Activated CD4-positive, alpha-beta T cell treated with anti-CD3 and anti-CD28 coated beads for 36 hours (primary cell): ENCODE measurements at regions of chr16 and their contacts with region 1.

Region 1: DNA sequence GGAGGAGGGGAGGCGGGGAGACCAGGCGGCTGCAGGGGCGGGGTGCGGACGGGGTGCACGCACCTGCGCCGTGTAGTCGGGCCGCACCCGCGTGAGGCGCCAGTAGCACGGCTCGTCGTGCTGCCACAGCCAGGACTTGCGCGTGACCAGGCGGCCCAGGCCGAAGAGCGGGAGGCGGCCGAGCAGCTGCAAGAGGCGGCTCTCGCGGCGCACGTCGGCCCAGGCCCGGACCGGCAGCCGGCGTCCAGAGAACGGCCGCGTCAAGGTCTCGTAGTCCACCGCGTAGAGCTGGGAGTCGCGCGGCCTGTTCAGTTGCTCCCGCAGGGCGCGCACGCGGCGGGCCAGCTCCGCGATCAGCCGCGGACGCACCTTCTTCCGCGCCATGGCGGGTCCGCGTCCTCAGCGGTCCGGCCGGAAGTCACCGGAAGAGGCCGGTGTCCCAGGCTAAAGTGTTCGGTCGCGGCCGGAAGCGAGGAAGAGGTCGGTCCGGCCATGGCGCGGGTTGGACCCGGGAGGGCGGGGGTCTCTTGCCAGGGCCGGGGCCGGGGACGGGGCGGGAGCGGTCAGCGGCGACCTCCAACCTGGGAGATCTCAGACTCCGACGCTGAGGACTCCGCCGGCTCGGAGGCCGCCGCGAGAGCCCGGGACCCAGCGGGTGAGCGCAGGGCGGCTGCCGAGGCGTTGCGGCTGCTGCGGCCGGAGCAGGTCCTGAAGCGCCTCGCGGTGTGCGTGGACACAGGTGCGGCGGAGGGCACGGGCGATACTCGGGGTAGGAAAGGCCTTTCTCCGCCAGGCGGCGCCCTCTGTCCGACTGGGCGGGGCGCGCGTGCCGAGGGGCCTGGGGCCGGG is at the starts of genes EME2 and MRPS34:
- DNase-seq: peak; percentile 90
- ATAC-seq: peak; percentile 53
- H3K4me3 Mint-ChIP-seq: peak within 1 kb of the TSS; percentile 94
- H3K27ac Mint-ChIP-seq: peak within 1 kb of the TSS; percentile 99
- H3K4me1 Mint-ChIP-seq: peaks cover 9% of the 10 kb centered on the region
- H3K27me3 Mint-ChIP-seq: no peaks in the 10 kb centered on the region
- total RNA-seq, gene EME2: 13.1 to 18.4 TPM
- total RNA-seq, gene MRPS34: 146 to 175 TPM

Region 2: GRCh38 chr16:1492923-1493745 is 279.8 kb before region 1 on chr16 and contains the start of gene TELO2:
- CTCF ChIA-PET with region 1: no interaction called
- POLR2A ChIA-PET with region 1: no interaction called
- intact Hi-C with region 1: loop called in 1 of 2 experiments (anchors 1 kb)
- DNase-seq: peak; percentile 94
- ATAC-seq: peak; percentile 89
- H3K4me3 Mint-ChIP-seq: peak within 1 kb of the TSS; percentile 92
- H3K27ac Mint-ChIP-seq: peak within 1 kb of the TSS; percentile 97
- H3K4me1 Mint-ChIP-seq: peaks cover 15% of the 10 kb centered on the region
- H3K27me3 Mint-ChIP-seq: no peaks in the 10 kb centered on the region
- total RNA-seq, gene TELO2: 48.1 to 60.0 TPM

Region 3: DNA sequence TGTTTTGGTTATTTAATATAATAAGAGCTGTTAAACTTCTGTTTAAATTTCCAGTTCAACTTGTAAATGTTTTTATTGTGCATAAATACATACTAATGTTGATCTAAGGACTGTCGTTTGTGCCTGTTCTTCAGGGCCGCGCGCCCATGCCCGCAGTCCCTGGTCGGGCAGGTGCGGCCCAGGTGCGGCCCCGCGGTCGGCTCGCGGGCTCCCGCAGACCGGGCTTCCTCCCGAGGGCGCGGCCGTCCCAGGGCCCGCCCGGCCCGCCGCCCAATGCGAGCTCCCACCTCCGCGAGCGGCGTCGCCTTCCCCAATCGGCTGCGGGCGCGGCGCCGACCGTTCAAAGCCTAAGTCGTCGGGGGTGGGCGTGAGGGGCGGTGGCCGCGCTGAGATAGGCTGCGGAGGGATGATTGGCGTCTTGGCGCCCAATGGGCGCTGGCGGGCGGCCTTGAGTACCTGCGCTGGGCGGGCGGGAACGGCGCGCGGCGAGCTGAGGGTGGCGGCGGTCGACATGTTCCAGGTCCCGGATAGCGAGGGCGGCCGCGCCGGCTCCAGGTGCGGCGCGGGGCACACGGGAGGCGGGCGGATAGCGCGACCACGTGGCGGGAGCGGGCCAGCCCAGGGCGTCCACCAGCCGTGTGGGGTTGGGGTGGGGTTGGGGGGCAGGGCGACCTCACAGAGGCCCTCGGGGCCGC is 95.0 kb before region 1 on chr16 and contains the start of gene JPT2:
- CTCF ChIA-PET with region 1: no interaction called
- POLR2A ChIA-PET with region 1: no interaction called
- intact Hi-C with region 1: loop called in 1 of 2 experiments (anchors 1 kb)
- DNase-seq: peak; percentile 98
- ATAC-seq: peak; percentile 99
- H3K4me3 Mint-ChIP-seq: peak within 1 kb of the TSS; percentile 94
- H3K27ac Mint-ChIP-seq: peak within 1 kb of the TSS; percentile 89
- H3K4me1 Mint-ChIP-seq: peaks cover 26% of the 10 kb centered on the region
- H3K27me3 Mint-ChIP-seq: no peaks in the 10 kb centered on the region
- total RNA-seq, gene JPT2: 77.1 to 111 TPM

Region 4: DNA sequence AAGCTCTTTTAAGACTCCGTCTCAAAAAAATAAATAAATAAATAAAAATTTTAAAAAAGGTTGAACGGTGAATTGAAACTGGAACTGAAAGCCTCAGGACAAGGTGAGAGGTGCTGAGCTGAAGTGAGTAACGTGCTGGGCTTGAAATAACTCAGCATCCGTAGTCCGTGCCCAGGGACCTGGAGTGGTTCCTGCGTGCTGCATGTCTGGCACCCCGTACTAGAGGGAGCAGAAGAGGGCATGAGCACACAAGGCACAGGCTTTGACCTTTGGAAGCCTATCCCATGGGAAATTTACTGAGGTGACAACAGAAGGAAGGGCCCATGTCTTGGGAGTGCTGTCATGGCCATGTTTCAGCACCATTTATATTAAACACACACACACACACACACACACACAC is 103.5 kb after region 1 on chr16:
- CTCF ChIA-PET with region 1: no interaction called
- POLR2A ChIA-PET with region 1: no interaction called
- intact Hi-C with region 1: no loop called
- DNase-seq: peak; percentile 39
- ATAC-seq: peak; percentile 78
- H3K4me3 Mint-ChIP-seq: no peak overlapping the region
- H3K27ac Mint-ChIP-seq: no peak overlapping the region
- H3K4me1 Mint-ChIP-seq: peaks cover 3% of the 10 kb centered on the region
- H3K27me3 Mint-ChIP-seq: peaks cover 22% of the 10 kb centered on the region

Region 5: GRCh38 chr16:1929578-1930337 is 156.8 kb after region 1 on chr16:
- CTCF ChIA-PET with region 1: no interaction called
- POLR2A ChIA-PET with region 1: no interaction called
- intact Hi-C with region 1: loop called in 1 of 2 experiments (anchors 1 kb)
- DNase-seq: peak; percentile 96
- ATAC-seq: peak; percentile 98
- H3K4me3 Mint-ChIP-seq: peak overlapping the region; percentile 47
- H3K27ac Mint-ChIP-seq: no peak overlapping the region
- H3K4me1 Mint-ChIP-seq: peaks cover 2% of the 10 kb centered on the region
- H3K27me3 Mint-ChIP-seq: peaks cover under 1% of the 10 kb centered on the region

Region 6: GRCh38 chr16:2205104-2205966 is 432.4 kb after region 1 on chr16 and contains the start of gene MLST8:
- CTCF ChIA-PET with region 1: no interaction called
- POLR2A ChIA-PET with region 1: no interaction called
- intact Hi-C with region 1: loop called in 1 of 2 experiments (anchors 2 kb)
- DNase-seq: peak; percentile 92
- ATAC-seq: peak; percentile 84
- H3K4me3 Mint-ChIP-seq: peak within 1 kb of the TSS; percentile 83
- H3K27ac Mint-ChIP-seq: peak within 1 kb of the TSS; percentile 84
- H3K4me1 Mint-ChIP-seq: peaks cover 16% of the 10 kb centered on the region
- H3K27me3 Mint-ChIP-seq: no peaks in the 10 kb centered on the region
- total RNA-seq, gene MLST8: 61.3 to 76.1 TPM

Region 7: GRCh38 chr16:3305109-3306068 is 1532.4 kb after region 1 on chr16 and contains the starts of genes TIGD7 and ZNF75A:
- CTCF ChIA-PET with region 1: no interaction called
- POLR2A ChIA-PET with region 1: no interaction called
- intact Hi-C with region 1: no loop called
- DNase-seq: peak; percentile 90
- ATAC-seq: peak; percentile 99
- H3K4me3 Mint-ChIP-seq: peak within 1 kb of the TSS; percentile 75
- H3K27ac Mint-ChIP-seq: peak within 1 kb of the TSS; percentile 84
- H3K4me1 Mint-ChIP-seq: peaks cover 15% of the 10 kb centered on the region
- H3K27me3 Mint-ChIP-seq: no peaks in the 10 kb centered on the region
- total RNA-seq, gene TIGD7: 2.9 TPM
- total RNA-seq, gene ZNF75A: 23.2 to 27.4 TPM